ENCODE measurements at regions of chr19 and their contacts with region 1.

Region 1: DNA sequence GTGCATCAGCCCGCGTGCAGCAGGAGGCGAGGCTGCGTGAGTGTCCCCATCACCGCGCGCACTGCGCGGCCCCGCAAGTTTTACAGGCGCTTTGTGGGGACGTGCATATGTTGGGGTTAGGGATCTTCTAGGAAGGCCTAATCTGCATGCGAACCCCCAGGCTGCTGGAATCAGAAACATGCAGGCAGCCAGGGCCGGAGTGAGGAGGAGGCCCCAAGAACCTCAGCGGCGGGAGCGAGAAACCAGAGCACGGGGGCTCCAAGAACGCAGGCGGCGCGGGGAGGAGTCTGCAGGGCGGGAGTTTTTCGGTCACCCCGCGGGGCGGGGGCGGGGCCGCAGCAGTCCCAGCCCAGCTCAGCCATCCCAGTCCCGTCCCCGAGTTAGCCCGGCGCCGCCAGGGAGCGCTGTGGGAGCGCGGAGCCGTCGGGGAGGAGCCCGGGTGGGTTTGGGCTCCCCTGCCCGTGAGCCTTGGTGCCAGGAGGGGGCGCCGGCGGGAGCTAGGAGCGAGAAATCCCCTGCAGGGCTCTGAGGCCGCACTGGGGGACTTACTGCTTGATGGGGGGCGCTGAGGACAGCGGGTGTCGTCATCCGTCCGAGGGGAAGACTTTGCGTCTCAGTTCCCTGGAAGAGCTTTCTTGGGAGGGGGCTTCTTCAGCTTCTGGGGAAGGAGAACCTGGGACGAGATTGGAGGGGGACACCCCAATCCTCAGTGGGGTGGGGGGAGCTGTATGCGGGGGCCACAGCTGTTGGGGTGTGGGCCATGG is 933 bp upstream of the NRTN start:
- DNase-seq: peak; percentile 89
- H3K4me3 ChIP-seq: peak overlapping the region in 1 of 3 experiments; percentile 2
- H3K27ac ChIP-seq: no peak overlapping the region
- H3K4me1 ChIP-seq: peaks cover 5% of the 10 kb centered on the region
- H3K27me3 ChIP-seq: peaks cover 2 to 7% of the 10 kb centered on the region in 2 experiments
- CTCF ChIP-seq: peak; percentile 100
- POLR2A ChIP-seq: no peak

Region 2: GRCh38 chr19:5814852-5815246 is 10.9 kb after region 1 on chr19:
- CTCF ChIA-PET with region 1: interaction called, 15 read pairs
- POLR2A ChIA-PET with region 1: no interaction called
- dilution Hi-C with region 1: no loop called
- intact Hi-C with region 1: no loop called
- DNase-seq: no peak
- H3K4me3 ChIP-seq: no peak overlapping the region
- H3K27ac ChIP-seq: no peak overlapping the region
- H3K4me1 ChIP-seq: no peaks in the 10 kb centered on the region
- H3K27me3 ChIP-seq: no peaks in the 10 kb centered on the region
- CTCF ChIP-seq: no peak
- POLR2A ChIP-seq: no peak

Region 3: GRCh38 chr19:5881543-5882299 is 77.8 kb after region 1 on chr19:
- CTCF ChIA-PET with region 1: interaction called, 19 read pairs
- POLR2A ChIA-PET with region 1: no interaction called
- dilution Hi-C with region 1: no loop called
- intact Hi-C with region 1: no loop called
- DNase-seq: no peak
- H3K4me3 ChIP-seq: no peak overlapping the region
- H3K27ac ChIP-seq: no peak overlapping the region
- H3K4me1 ChIP-seq: no peaks in the 10 kb centered on the region
- H3K27me3 ChIP-seq: peaks cover 0 to 3% of the 10 kb centered on the region in 2 experiments
- CTCF ChIP-seq: no peak
- POLR2A ChIP-seq: no peak

Region 4: DNA sequence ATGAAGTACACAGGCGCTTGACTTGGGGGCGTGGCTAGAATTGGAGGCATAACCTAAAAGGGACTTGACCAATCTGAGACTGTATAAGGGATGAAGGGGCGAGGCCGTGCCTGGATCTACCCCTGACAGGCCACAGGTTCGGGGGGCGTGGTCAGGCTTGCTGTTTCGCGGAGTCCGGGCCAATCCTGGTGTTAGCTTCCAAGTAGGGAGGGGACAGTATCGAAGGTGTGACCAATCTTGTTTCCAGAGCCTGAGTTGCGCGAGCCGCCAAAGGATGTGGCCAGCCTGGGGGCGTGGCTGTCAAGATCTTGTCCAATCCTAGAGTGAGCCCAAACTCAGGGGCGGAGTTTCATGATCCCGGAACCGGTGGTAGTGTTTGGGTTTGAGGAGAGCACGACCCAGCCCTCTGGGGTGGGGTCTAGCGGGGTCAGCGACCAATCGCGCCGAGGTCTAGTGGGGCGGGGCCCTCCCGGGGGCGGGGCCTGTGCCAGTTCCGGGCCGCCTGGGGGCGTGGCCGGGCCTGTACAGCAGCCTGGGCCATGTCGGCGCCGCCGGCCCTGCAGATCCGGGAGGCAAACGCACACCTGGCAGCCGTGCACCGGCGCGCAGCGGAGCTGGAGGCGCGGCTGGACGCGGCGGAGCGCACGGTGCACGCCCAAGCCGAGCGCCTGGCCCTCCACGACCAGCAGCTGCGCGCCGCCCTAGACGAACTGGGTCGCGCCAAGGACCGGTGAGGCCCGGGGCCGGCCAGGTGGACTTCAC is 100.6 kb after region 1 on chr19 and contains the start of gene VMAC:
- CTCF ChIA-PET with region 1: interaction called, 37 read pairs
- POLR2A ChIA-PET with region 1: interaction called, 4 read pairs
- dilution Hi-C with region 1: no loop called
- intact Hi-C with region 1: no loop called
- DNase-seq: peak; percentile 100
- H3K4me3 ChIP-seq: peak within 1 kb of the TSS; percentile 45 to 89 (median 86)
- H3K27ac ChIP-seq: peak within 1 kb of the TSS; percentile 90
- H3K4me1 ChIP-seq: peaks cover 8% of the 10 kb centered on the region
- H3K27me3 ChIP-seq: no peaks in the 10 kb centered on the region
- CTCF ChIP-seq: no peak
- POLR2A ChIP-seq: peak; percentile 56
- total RNA-seq, gene VMAC: 4.4 and 4.7 TPM in 2 replicates

Region 5: GRCh38 chr19:5987077-5987818 is 183.3 kb after region 1 on chr19:
- CTCF ChIA-PET with region 1: interaction called, 12 read pairs
- POLR2A ChIA-PET with region 1: no interaction called
- dilution Hi-C with region 1: no loop called
- intact Hi-C with region 1: loop called (anchors 10 kb)
- DNase-seq: peak; percentile 86
- H3K4me3 ChIP-seq: no peak overlapping the region
- H3K27ac ChIP-seq: no peak overlapping the region
- H3K4me1 ChIP-seq: peaks cover 17% of the 10 kb centered on the region
- H3K27me3 ChIP-seq: no peaks in the 10 kb centered on the region
- CTCF ChIP-seq: peak; percentile 86 to 94
- POLR2A ChIP-seq: no peak

Region 6: GRCh38 chr19:6048808-6049405 is 245.0 kb after region 1 on chr19:
- CTCF ChIA-PET with region 1: interaction called, 13 read pairs
- POLR2A ChIA-PET with region 1: no interaction called
- dilution Hi-C with region 1: no loop called
- intact Hi-C with region 1: no loop called
- DNase-seq: peak; percentile 77
- H3K4me3 ChIP-seq: no peak overlapping the region
- H3K27ac ChIP-seq: peak overlapping the region; percentile 20
- H3K4me1 ChIP-seq: peaks cover 4% of the 10 kb centered on the region
- H3K27me3 ChIP-seq: no peaks in the 10 kb centered on the region
- CTCF ChIP-seq: peak; percentile 61 to 83
- POLR2A ChIP-seq: no peak

Measured in endothelial cell of umbilical vein (primary cell).